Common myeloid progenitor, CD34-positive (primary cell): ENCODE measurements at regions of chr7 and their contacts with region 1.

Region 1: DNA sequence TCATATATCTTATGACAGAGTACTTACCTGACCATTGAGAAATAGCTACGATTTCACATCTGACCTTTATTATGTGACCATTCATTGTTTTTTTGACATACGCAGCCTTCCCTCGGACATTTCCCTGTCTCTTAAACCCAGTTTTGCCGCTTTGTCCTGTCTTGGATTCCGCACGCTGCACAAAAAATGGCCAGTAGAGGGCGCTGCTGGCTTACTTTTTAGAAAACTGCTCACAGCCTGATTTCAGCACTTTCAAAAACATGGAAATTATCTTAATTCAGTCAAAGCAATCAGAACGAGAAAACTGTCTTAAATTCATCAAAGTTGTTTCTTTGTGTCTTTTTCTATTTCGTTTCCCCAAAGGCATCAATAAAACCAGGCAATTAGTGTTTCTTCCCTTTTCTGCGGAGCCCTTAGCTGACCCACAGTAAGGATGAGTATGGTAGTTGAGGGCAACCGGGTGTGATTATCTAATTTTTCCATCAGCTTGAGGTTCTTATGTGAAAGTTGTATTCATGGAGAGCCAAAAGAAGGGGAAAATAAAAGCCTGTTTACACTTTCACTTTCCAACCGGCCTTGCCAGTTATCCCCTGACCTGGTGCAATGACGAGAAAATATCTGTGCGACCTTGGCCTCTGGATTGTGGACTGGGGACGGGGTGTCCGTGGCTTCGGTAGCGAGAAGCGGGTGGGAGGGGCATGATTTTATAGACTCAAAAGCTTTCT is 144.4 kb downstream of the DYNC1I1 start:
- DNase-seq: peak; percentile 67 to 80 (median 70)
- H3K4me3 ChIP-seq: peak overlapping the region in 3 of 7 experiments; percentile 4 to 55 (median 28)
- H3K27ac ChIP-seq: no peak overlapping the region
- H3K4me1 ChIP-seq: peaks cover 0 to 2% (median 0%) of the 10 kb centered on the region in 4 experiments
- H3K27me3 ChIP-seq: peaks cover 0 to 16% (median 4%) of the 10 kb centered on the region in 5 experiments

Region 2: GRCh38 chr7:95905165-95905564 is 11.6 kb before region 1 on chr7:
- CTCF ChIA-PET with region 1: interaction called, 21 read pairs
- POLR2A ChIA-PET with region 1: no interaction called
- DNase-seq: peak in 2 of 3 donors; percentile 21 to 31
- H3K4me3 ChIP-seq: no peak overlapping the region
- H3K27ac ChIP-seq: no peak overlapping the region
- H3K4me1 ChIP-seq: peaks cover 0 to 13% (median 5%) of the 10 kb centered on the region in 4 experiments
- H3K27me3 ChIP-seq: peaks cover 0 to 2% (median 0%) of the 10 kb centered on the region in 5 experiments

Region 3: DNA sequence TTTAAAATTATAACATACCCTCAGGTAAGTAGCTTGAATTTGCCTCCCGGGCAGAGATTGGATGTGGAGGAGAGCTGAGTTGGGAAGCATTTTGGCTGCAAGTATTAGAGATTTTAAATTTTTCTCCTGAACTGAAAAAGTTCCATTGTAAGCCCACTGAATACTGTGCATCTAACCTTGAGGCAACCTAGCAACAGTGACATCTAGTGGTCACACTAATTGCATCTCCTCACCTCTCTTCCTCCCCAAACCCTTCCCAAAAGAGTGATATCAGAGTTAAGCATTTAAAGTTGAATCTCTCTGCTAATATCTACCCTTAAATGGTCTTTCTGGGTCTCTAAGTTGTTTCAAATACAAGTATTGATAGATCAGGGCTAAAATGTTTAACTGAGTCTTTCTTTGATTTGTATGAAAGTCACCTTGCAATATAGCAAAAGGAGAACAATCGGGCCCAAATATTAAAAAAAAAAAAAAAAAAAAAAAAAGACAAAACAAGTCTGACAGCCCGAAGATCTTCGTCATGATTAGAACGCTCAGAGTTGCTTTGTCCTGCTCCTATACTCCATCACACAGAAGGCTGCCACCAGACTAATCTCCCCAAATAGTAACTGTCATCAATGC is 1148.3 kb after region 1 on chr7:
- CTCF ChIA-PET with region 1: interaction called, 22 read pairs
- POLR2A ChIA-PET with region 1: no interaction called
- DNase-seq: peak; percentile 49 to 77 (median 69)
- H3K4me3 ChIP-seq: no peak overlapping the region
- H3K27ac ChIP-seq: no peak overlapping the region
- H3K4me1 ChIP-seq: no peaks in the 10 kb centered on the region
- H3K27me3 ChIP-seq: no peaks in the 10 kb centered on the region